Naive thymus-derived CD4-positive, alpha-beta T cell (primary cell): ENCODE measurements at regions of chr1 and their contacts with region 1.

Region 1: GRCh38 chr1:154974063-154974807 is at the start of gene CKS1B:
- DNase-seq: peak; percentile 86 to 100 (median 98)
- ATAC-seq: peak; percentile 89
- H3K4me3 ChIP-seq: peak within 1 kb of the TSS; percentile 82
- H3K4me3 Mint-ChIP-seq: no peak within 1 kb of the TSS
- H3K27ac ChIP-seq: peak within 1 kb of the TSS; percentile 94
- H3K27ac Mint-ChIP-seq: no peak within 1 kb of the TSS
- H3K4me1 ChIP-seq: peaks cover 28 to 35% of the 10 kb centered on the region in 2 donors
- H3K4me1 Mint-ChIP-seq: peaks cover 27 to 39% (median 31%) of the 10 kb centered on the region in 7 donors
- H3K27me3 ChIP-seq: no peaks in the 10 kb centered on the region
- H3K27me3 Mint-ChIP-seq: no peaks in the 10 kb centered on the region
- total RNA-seq, gene CKS1B: 8.4 to 105 (median 10.2) TPM

Region 2: DNA sequence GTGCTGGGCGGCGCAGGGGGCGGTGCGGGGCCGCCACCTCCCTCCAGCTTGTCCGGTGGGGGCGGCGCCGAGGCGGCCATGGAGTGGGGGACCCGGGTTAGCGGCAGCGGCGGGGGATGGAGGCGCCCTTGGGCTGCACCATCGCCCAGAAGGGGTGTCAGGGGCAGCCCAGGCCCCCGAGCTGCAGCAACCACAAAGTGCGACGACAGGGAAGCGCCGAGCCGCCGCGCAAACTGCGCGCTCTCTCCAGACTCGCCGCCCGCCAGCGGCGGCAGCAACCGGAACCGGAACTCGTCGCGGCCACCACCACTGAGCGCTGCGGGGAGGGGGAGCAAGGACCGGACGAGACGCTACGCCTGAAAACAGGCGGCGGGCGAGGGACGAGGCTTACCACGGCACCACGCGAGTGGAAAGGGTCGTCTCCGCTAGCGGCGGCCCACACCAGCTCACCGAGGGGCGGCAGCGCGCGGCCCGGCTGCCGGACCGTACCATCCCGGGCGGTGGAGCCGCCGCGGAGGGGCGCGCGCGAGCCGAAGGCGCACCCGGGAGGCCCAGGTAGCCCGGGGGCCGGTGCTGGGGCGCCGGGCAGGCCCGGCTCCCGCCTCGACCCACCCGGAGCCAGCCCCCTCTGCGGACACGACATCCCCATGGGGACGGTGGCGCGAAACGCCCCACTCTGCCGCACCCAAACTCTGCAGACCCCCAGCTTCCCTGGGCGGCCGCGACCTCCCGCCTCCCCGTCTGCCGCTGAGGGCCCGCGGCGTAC is 12.6 kb before region 1 on chr1 and contains the start of gene PYGO2:
- CTCF ChIA-PET with region 1: interaction called, 3 read pairs
- POLR2A ChIA-PET with region 1: interaction called, 160 read pairs
- intact Hi-C with region 1: loop called (anchors 1 kb)
- DNase-seq: peak; percentile 72 to 88 (median 78)
- ATAC-seq: peak; percentile 86
- H3K4me3 ChIP-seq: peak within 1 kb of the TSS; percentile 54
- H3K4me3 Mint-ChIP-seq: peak within 1 kb of the TSS; percentile 91 to 98 (median 94)
- H3K27ac ChIP-seq: peak within 1 kb of the TSS; percentile 96
- H3K27ac Mint-ChIP-seq: peak within 1 kb of the TSS; percentile 83 to 100 (median 95)
- H3K4me1 ChIP-seq: peaks cover 18 to 26% of the 10 kb centered on the region in 2 donors
- H3K4me1 Mint-ChIP-seq: peaks cover 16 to 58% (median 46%) of the 10 kb centered on the region in 7 donors
- H3K27me3 ChIP-seq: no peaks in the 10 kb centered on the region
- H3K27me3 Mint-ChIP-seq: no peaks in the 10 kb centered on the region
- total RNA-seq, gene PYGO2: 33.0 to 69.5 (median 46.2) TPM

Region 3: DNA sequence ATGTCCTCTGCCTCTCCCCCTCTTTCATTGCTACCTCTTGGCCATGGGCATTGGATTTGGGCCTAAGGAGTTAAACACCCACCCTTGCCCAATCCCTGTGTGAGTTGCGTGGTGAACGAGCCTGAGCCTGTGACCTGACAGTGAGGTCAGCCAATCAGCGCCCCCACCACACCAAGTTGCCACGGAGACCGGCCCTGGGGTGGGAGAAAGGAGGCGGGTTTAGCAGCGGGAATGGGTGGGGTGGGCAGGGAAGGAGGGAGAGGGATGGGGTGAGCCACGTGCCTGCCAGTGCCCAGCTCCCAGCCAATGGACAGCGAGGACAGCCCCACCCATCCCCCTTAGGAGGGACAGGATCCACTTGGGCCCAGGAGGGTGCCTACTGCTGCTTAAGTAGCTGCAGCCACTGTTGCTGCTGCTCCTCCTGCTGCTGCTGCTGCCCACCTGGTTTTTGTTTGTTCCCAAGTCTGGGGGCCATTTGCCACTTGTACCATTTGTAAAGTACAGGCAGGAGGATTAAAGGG is 37.9 kb after region 1 on chr1:
- CTCF ChIA-PET with region 1: interaction called, 94 read pairs
- POLR2A ChIA-PET with region 1: interaction called, 37 read pairs
- intact Hi-C with region 1: loop called (anchors 1 kb)
- DNase-seq: peak in 1 of 9 donors; percentile 56
- ATAC-seq: peak; percentile 7
- H3K4me3 ChIP-seq: peak overlapping the region; percentile 38
- H3K4me3 Mint-ChIP-seq: peak overlapping the region; percentile 75 to 99 (median 90)
- H3K27ac ChIP-seq: peak overlapping the region; percentile 83
- H3K27ac Mint-ChIP-seq: peak overlapping the region; percentile 80 to 98 (median 95)
- H3K4me1 ChIP-seq: peaks cover 56 to 71% of the 10 kb centered on the region in 2 donors
- H3K4me1 Mint-ChIP-seq: peaks cover 30 to 78% (median 63%) of the 10 kb centered on the region in 7 donors
- H3K27me3 ChIP-seq: no peaks in the 10 kb centered on the region
- H3K27me3 Mint-ChIP-seq: no peaks in the 10 kb centered on the region

Region 4: DNA sequence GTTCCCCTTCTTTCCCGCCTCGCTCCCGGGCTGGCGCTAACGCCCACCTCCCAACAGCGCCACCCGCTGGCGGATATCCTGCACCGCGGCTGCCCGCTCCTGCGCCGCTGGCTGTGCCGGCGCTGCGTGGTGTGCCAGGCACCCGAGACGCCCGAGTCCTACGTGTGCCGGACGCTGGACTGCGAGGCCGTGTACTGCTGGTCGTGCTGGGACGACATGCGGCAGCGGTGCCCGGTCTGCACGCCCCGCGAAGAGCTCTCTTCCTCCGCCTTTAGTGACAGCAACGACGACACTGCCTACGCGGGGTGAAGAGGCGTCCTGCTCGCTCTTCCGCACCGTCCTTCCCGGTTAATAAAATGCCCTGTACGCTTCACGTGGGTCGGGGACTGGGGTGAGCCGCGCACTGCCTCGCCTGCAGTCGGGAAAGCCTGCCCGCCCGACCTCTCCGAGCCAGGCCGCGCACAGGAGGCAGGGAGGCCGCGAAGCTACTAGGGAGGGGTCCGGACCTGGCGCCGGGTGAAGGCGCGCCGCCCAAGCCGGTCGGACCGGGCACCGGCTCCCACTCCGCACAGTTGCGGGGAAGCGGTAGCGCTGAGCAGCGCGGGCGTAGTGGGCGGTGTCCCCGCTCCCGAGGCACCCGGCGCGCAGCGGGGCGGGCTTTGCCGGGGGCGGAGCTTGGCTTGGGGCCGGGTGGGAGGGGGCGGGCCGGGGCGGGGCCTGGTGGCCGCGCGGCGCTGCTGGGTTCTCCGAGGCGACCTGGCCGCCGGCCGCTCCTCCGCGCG is 76.5 kb after region 1 on chr1 and contains the start of gene ADAM15:
- CTCF ChIA-PET with region 1: interaction called, 4 read pairs
- POLR2A ChIA-PET with region 1: interaction called, 6 read pairs
- intact Hi-C with region 1: loop called (anchors 1 kb)
- DNase-seq: peak; percentile 56 to 88 (median 74)
- ATAC-seq: peak; percentile 90
- H3K4me3 ChIP-seq: peak within 1 kb of the TSS; percentile 66
- H3K4me3 Mint-ChIP-seq: peak within 1 kb of the TSS; percentile 74 to 91 (median 88)
- H3K27ac ChIP-seq: peak within 1 kb of the TSS; percentile 72
- H3K27ac Mint-ChIP-seq: peak within 1 kb of the TSS in 8 of 9 donors; percentile 47 to 85 (median 70)
- H3K4me1 ChIP-seq: peaks cover 5 to 13% of the 10 kb centered on the region in 2 donors
- H3K4me1 Mint-ChIP-seq: peaks cover 14 to 31% (median 23%) of the 10 kb centered on the region in 7 donors
- H3K27me3 ChIP-seq: no peaks in the 10 kb centered on the region
- H3K27me3 Mint-ChIP-seq: no peaks in the 10 kb centered on the region
- total RNA-seq, gene ADAM15: 16.9 to 53.7 (median 28.8) TPM